Naive thymus-derived CD4-positive, alpha-beta T cell (primary cell): ENCODE measurements at regions of chr2 and their contacts with region 1.

Region 1: DNA sequence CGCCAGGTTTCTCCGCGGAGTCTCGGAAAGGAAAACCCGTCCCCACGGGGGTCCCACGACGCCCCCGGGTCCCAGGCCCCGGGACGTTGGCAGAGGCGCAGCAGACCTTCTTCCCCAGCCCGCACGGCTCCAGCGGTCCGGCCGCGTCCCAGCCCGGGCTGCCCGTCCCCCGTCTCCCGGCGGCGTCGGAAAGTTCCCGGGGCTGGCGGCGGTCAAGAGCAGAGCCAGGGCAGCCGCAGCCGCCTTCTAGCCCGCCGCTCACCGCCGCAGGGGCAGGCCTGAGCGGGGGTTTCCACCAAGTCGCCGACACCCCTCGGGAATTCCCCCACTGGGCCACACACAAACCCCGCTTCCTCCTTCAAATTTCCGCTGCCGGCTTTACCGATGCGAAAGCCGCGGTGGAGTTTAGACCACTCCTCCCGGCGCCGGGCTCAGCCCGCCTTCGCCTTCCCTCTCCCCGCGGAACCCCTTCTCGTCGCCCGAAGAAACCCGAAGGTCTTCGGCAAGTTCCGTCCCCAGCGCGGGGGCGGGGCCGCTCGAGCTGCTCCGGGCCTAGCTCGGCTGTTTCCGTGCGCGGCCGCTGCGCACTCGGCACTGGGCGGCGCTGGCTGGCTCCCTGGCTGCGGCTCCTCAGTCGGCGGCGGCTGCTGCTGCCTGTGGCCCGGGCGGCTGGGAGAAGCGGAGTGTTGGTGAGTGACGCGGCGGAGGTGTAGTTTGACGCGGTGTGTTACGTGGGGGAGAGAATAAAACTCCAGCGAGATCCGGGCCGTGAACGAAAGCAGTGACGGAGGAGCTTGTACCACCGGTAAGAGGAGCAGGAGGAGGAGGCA is at the start of gene CREB1:
- DNase-seq: peak; percentile 99 to 100 (median 100)
- ATAC-seq: peak; percentile 87
- H3K4me3 ChIP-seq: peak within 1 kb of the TSS; percentile 75
- H3K4me3 Mint-ChIP-seq: peak within 1 kb of the TSS; percentile 95 to 100 (median 99)
- H3K27ac ChIP-seq: peak within 1 kb of the TSS; percentile 100
- H3K27ac Mint-ChIP-seq: peak within 1 kb of the TSS; percentile 98 to 100 (median 100)
- H3K4me1 ChIP-seq: peaks cover 52 to 59% of the 10 kb centered on the region in 2 donors
- H3K4me1 Mint-ChIP-seq: peaks cover 45 to 85% (median 69%) of the 10 kb centered on the region in 7 donors
- H3K27me3 ChIP-seq: no peaks in the 10 kb centered on the region
- H3K27me3 Mint-ChIP-seq: peaks cover 0 to 7% (median 0%) of the 10 kb centered on the region in 5 donors
- total RNA-seq, gene CREB1: 89.7 to 141 (median 115) TPM

Region 2: GRCh38 chr2:206765242-206766056 is 764.1 kb before region 1 on chr2 and contains the starts of genes FASTKD2 and MDH1B:
- CTCF ChIA-PET with region 1: no interaction called
- POLR2A ChIA-PET with region 1: interaction called, 9 read pairs
- intact Hi-C with region 1: loop called (anchors 1 kb)
- DNase-seq: peak; percentile 62 to 91 (median 85)
- ATAC-seq: peak; percentile 93
- H3K4me3 ChIP-seq: peak within 1 kb of the TSS; percentile 70
- H3K4me3 Mint-ChIP-seq: peak within 1 kb of the TSS in 8 of 10 donors; percentile 89 to 96 (median 94)
- H3K27ac ChIP-seq: peak within 1 kb of the TSS; percentile 95
- H3K27ac Mint-ChIP-seq: peak within 1 kb of the TSS; percentile 93 to 99 (median 97)
- H3K4me1 ChIP-seq: peaks cover 12 to 16% of the 10 kb centered on the region in 2 donors
- H3K4me1 Mint-ChIP-seq: peaks cover 13 to 46% (median 41%) of the 10 kb centered on the region in 7 donors
- H3K27me3 ChIP-seq: no peaks in the 10 kb centered on the region
- H3K27me3 Mint-ChIP-seq: peaks cover 0 to 4% (median 0%) of the 10 kb centered on the region in 5 donors
- total RNA-seq, gene FASTKD2: 16.5 to 31.9 (median 24.5) TPM
- total RNA-seq, gene MDH1B: 0.17 to 0.54 (median 0.24) TPM in 4 of 5 experiments, not detected in the other

Region 3: DNA sequence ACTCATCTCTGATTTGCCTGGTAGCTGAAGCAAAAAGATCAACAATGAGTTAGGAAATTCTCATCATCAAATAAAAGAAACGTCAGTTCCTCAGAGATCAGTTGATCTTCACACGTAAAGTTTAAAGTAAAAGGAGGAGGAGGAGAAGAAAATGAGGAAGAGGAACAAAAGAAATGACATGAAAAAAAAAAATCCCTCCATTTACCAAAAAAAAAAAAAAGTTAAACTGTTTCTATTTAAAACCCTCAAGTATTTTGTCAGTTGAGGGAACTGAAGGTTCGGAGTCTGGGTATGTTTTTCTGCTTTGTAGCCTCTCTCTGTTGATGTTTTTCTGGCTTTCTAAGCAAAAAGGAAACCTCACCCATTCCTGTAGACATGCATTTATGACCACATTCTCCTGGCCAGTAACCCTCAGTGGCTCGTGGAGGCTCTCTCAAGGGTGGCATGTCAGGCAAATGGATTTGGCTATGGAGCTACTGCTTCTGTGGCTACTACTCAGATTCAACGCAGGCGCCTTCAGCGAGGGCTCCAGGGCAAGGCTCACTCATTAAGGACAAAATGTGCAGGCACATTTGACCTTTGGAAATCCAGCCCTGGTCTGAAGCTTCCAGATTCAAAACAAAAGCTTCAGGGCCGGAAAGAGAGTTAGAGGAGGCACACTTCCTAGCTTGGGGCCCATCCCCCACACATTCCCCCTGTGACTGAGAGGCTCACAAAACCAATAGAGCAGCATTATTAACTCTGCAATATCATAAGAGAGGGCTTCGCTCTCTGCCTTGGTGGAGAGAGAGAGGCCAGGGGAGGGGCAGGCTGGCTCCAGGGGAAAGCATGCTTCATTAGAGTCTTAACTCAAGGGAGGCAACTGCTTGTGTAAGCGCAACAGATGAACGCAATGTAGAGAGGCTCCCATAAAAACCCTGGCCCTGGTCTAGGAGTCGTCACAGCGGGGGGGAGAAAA is 386.1 kb before region 1 on chr2:
- CTCF ChIA-PET with region 1: no interaction called
- POLR2A ChIA-PET with region 1: interaction called, 14 read pairs
- intact Hi-C with region 1: loop called (anchors 1 to 5 kb)
- DNase-seq: peak; percentile 34 to 92 (median 83)
- ATAC-seq: peak; percentile 83
- H3K4me3 ChIP-seq: peak overlapping the region; percentile 57
- H3K4me3 Mint-ChIP-seq: peak overlapping the region; percentile 59 to 90 (median 80)
- H3K27ac ChIP-seq: peak overlapping the region; percentile 86
- H3K27ac Mint-ChIP-seq: peak overlapping the region; percentile 92 to 99 (median 96)
- H3K4me1 ChIP-seq: peaks cover 17 to 51% of the 10 kb centered on the region in 2 donors
- H3K4me1 Mint-ChIP-seq: peaks cover 45 to 95% (median 87%) of the 10 kb centered on the region in 7 donors
- H3K27me3 ChIP-seq: no peaks in the 10 kb centered on the region
- H3K27me3 Mint-ChIP-seq: no peaks in the 10 kb centered on the region

Region 4: GRCh38 chr2:207254591-207255464 is 274.7 kb before region 1 on chr2:
- CTCF ChIA-PET with region 1: no interaction called
- POLR2A ChIA-PET with region 1: no interaction called
- intact Hi-C with region 1: no loop called
- DNase-seq: no peak
- ATAC-seq: peak; percentile 58
- H3K4me3 ChIP-seq: no peak overlapping the region
- H3K4me3 Mint-ChIP-seq: no peak overlapping the region
- H3K27ac ChIP-seq: no peak overlapping the region
- H3K27ac Mint-ChIP-seq: no peak overlapping the region
- H3K4me1 ChIP-seq: no peaks in the 10 kb centered on the region
- H3K4me1 Mint-ChIP-seq: peaks cover 0 to 7% (median 3%) of the 10 kb centered on the region in 7 donors
- H3K27me3 ChIP-seq: no peaks in the 10 kb centered on the region
- H3K27me3 Mint-ChIP-seq: peaks cover 0 to 7% (median 4%) of the 10 kb centered on the region in 5 donors

Region 5: GRCh38 chr2:207503234-207503633 is 26.3 kb before region 1 on chr2:
- CTCF ChIA-PET with region 1: no interaction called
- POLR2A ChIA-PET with region 1: interaction called, 36 read pairs
- intact Hi-C with region 1: loop called (anchors 1 kb)
- DNase-seq: no peak
- ATAC-seq: peak; percentile 60
- H3K4me3 ChIP-seq: no peak overlapping the region
- H3K4me3 Mint-ChIP-seq: no peak overlapping the region
- H3K27ac ChIP-seq: no peak overlapping the region
- H3K27ac Mint-ChIP-seq: peak overlapping the region in 1 of 9 donors; percentile 50
- H3K4me1 ChIP-seq: peaks cover 11 to 30% of the 10 kb centered on the region in 2 donors
- H3K4me1 Mint-ChIP-seq: peaks cover 37 to 72% (median 52%) of the 10 kb centered on the region in 7 donors
- H3K27me3 ChIP-seq: no peaks in the 10 kb centered on the region
- H3K27me3 Mint-ChIP-seq: no peaks in the 10 kb centered on the region

Region 6: GRCh38 chr2:207565736-207566500 is 36.4 kb after region 1 on chr2:
- CTCF ChIA-PET with region 1: no interaction called
- POLR2A ChIA-PET with region 1: interaction called, 14 read pairs
- intact Hi-C with region 1: loop called in 1 of 2 experiments (anchors 2 kb)
- DNase-seq: no peak
- ATAC-seq: no peak
- H3K4me3 ChIP-seq: no peak overlapping the region
- H3K4me3 Mint-ChIP-seq: no peak overlapping the region
- H3K27ac ChIP-seq: no peak overlapping the region
- H3K27ac Mint-ChIP-seq: peak overlapping the region in 7 of 9 donors; percentile 22 to 75 (median 41)
- H3K4me1 ChIP-seq: no peaks in the 10 kb centered on the region
- H3K4me1 Mint-ChIP-seq: peaks cover 5 to 46% (median 25%) of the 10 kb centered on the region in 7 donors
- H3K27me3 ChIP-seq: no peaks in the 10 kb centered on the region
- H3K27me3 Mint-ChIP-seq: no peaks in the 10 kb centered on the region

Region 7: GRCh38 chr2:207710814-207711740 is 181.5 kb after region 1 on chr2 and contains the start of gene CCNYL1:
- CTCF ChIA-PET with region 1: interaction called, 5 read pairs
- POLR2A ChIA-PET with region 1: interaction called, 24 read pairs
- intact Hi-C with region 1: loop called (anchors 1 kb)
- DNase-seq: peak; percentile 93 to 98 (median 97)
- ATAC-seq: peak; percentile 98
- H3K4me3 ChIP-seq: peak within 1 kb of the TSS; percentile 88
- H3K4me3 Mint-ChIP-seq: peak within 1 kb of the TSS; percentile 94 to 99 (median 97)
- H3K27ac ChIP-seq: peak within 1 kb of the TSS; percentile 83
- H3K27ac Mint-ChIP-seq: peak within 1 kb of the TSS; percentile 83 to 98 (median 93)
- H3K4me1 ChIP-seq: peaks cover 4 to 11% of the 10 kb centered on the region in 2 donors
- H3K4me1 Mint-ChIP-seq: peaks cover 15 to 32% (median 27%) of the 10 kb centered on the region in 7 donors
- H3K27me3 ChIP-seq: no peaks in the 10 kb centered on the region
- H3K27me3 Mint-ChIP-seq: peaks cover 0 to 3% (median 0%) of the 10 kb centered on the region in 5 donors
- total RNA-seq, gene CCNYL1: 6.7 to 16.7 (median 10.7) TPM